Right cardiac atrium (tissue), 5 donors: ENCODE measurements at regions of chr4 and their contacts with region 1.

Region 1: GRCh38 chr4:154551872-154552686 is 1.9 kb upstream of the PLRG1 start:
- DNase-seq: peak; percentile 65 to 87 (median 82)
- ATAC-seq: peak; percentile 76 to 82
- H3K4me3 ChIP-seq: no peak overlapping the region
- H3K27ac ChIP-seq: no peak overlapping the region
- H3K4me1 ChIP-seq: no peaks in the 10 kb centered on the region
- H3K27me3 ChIP-seq: no peaks in the 10 kb centered on the region

Region 2: DNA sequence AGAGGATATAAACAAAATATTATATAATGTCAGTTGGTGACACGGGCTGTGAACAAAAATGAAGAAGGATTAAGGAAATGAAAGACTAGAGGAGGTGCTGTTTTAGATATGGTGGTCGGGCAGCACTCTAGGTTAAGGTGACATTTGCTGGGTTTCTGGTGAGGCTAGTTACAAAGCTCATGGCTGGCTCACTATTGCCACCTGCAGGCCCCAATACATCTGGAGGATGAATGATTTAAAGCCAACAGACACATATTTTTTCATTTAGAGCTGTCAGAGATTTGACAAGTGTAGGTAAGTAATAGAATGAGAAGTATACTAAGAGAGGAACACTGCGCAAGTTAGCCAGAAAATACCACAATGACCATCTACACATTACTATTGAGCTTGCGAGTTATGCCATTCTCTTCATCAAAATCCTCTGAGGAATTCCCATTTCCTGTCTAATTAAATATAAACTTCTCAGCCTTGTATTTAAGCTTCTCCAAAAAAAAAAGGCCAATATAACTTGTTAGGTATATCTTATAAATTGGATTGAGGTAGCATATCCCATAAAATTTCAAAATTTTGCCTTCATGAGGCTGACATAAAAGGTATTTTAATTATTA is 66.7 kb after region 1 on chr4:
- intact Hi-C with region 1: loop called in 3 of 4 experiments (anchors 5 to 10 kb)
- DNase-seq: peak in 2 of 3 donors; percentile 34 to 68
- ATAC-seq: peak in 1 of 2 donors; percentile 40
- H3K4me3 ChIP-seq: no peak overlapping the region
- H3K27ac ChIP-seq: no peak overlapping the region
- H3K4me1 ChIP-seq: no peaks in the 10 kb centered on the region
- H3K27me3 ChIP-seq: no peaks in the 10 kb centered on the region

Region 3: DNA sequence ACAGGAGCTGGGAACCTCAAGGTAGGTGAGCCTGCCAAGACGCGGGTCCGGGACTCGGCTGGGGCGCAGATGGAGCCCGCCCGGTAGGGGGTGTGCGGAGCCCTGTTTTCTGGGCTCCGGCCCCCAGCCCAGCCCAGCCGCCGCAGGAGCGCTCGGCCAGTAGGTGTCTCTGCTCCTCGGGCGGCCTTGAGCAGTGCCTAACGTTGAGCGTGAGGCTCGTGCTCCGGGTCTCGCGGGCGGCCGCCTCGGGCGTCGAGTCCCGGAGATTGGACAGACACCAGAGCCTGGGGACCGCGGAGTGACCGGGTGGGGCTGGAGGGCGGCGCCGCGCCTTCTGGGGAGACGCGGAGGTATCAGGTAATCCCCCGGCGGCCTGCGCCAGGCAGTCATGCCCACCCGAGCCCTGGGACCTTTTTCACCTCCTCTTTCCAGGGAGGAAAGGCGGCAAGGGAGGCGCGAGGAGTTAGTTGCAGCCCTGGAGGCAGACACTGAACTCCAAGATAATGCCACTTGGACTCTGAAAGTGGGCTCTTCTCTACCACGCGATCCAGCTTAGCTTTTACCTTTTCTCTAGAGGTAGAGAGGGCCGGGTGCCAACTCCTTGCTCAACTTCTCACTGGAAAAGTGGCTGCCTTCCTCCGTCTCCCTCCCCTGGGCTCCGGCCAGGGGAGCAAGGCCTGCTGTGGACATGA is 74.9 kb after region 1 on chr4:
- intact Hi-C with region 1: loop called in 1 of 4 experiments (anchors 10 kb)
- DNase-seq: peak; percentile 43 to 77 (median 66)
- ATAC-seq: peak; percentile 92 to 93
- H3K4me3 ChIP-seq: peak overlapping the region; percentile 11
- H3K27ac ChIP-seq: no peak overlapping the region
- H3K4me1 ChIP-seq: no peaks in the 10 kb centered on the region
- H3K27me3 ChIP-seq: no peaks in the 10 kb centered on the region

Region 4: DNA sequence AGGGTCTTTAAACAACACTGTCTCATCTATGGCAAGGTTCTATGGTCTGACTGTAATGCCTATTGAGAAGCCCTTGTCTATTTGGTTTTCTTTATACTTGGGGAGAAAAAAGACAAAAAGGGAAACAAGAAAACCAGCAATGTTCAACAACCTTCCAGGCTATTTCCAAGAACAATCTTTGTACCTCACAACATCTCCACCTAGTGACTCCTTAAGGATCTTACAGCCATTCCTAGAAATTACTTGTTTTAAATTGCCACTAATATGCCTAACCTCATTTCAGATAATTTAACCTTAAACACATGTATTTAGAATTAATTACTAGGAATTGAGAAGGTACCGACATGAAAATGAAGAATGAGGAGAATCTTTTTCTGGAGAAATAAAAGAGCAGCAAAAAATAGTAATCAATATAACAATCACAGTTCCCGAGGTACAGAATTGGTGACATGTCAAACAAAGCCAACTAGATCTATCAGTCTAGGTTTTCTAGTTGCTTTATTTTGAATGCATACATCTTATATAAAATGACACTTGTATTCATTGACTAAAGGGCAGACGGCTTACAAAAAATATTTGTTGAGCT is 227.4 kb after region 1 on chr4:
- intact Hi-C with region 1: loop called in 2 of 4 experiments (anchors 10 kb)
- DNase-seq: no peak
- ATAC-seq: no peak
- H3K4me3 ChIP-seq: no peak overlapping the region
- H3K27ac ChIP-seq: no peak overlapping the region
- H3K4me1 ChIP-seq: no peaks in the 10 kb centered on the region
- H3K27me3 ChIP-seq: no peaks in the 10 kb centered on the region